ENCODE measurements at regions of chr9 and their contacts with region 1.

Region 1: GRCh38 chr9:112717661-112718341 is at the start of gene INIP:
- H3K4me3 ChIP-seq: peak within 1 kb of the TSS; percentile 81
- H3K27ac ChIP-seq: peak within 1 kb of the TSS; percentile 57
- H3K4me1 ChIP-seq: no peaks in the 10 kb centered on the region
- CTCF ChIP-seq: peak; percentile 70

Region 2: GRCh38 chr9:112379177-112380101 is 338.4 kb before region 1 on chr9:
- CTCF ChIA-PET with region 1: no interaction called
- POLR2A ChIA-PET with region 1: interaction called, 16 read pairs
- H3K4me3 ChIP-seq: peak overlapping the region; percentile 89
- H3K27ac ChIP-seq: peak overlapping the region; percentile 95
- H3K4me1 ChIP-seq: no peaks in the 10 kb centered on the region
- CTCF ChIP-seq: no peak

Region 3: DNA sequence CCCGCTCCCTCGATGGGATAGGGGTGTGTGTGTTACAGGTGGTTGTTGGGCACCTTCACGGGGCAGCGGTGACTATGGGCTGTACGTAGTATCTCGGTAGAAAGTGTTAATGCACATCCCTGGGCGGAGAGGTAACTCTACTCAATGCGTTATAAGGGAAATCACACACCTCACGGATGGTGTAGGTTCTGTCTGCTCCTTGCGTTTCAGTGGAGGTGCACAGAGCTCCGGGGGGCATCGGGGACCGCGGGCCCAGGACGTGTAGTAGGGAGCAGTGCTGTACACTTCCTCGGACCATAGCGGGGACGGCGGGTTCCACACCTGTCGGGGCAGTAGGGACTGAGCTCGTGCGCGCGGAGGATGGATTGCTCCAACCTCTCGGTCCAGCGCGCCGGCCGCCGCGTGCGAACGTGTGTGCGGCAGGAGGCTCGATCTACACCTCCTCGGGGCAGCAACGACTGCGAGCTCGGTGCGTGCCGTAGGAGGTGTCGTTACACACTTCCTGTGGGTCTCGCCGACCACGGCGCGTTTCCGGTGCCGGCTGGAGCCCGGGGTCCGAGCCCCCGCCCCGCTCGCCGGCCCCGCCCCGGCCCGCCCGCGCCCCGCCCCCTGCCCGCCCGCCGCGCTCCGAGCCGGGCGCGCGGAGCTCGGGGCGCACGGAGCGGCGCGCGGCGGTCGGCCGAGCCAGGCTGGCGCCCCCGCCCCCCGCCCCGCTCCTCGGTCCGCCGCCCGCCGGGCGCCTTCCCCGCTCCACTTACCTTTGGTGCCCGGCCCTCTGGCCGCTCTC is 231.4 kb before region 1 on chr9 and contains the start of gene KIAA1958:
- CTCF ChIA-PET with region 1: interaction called, 3 read pairs
- POLR2A ChIA-PET with region 1: interaction called, 10 read pairs
- H3K4me3 ChIP-seq: peak within 1 kb of the TSS; percentile 97
- H3K27ac ChIP-seq: peak within 1 kb of the TSS; percentile 82
- H3K4me1 ChIP-seq: peaks cover 11% of the 10 kb centered on the region; the same call in 1 of the 2 replicates
- CTCF ChIP-seq: 0 out of 2 replicates have a peak, but pooled peaks have one; percentile 8

Region 4: GRCh38 chr9:112605518-112605917 is 112.3 kb before region 1 on chr9:
- CTCF ChIA-PET with region 1: no interaction called
- POLR2A ChIA-PET with region 1: no interaction called
- H3K4me3 ChIP-seq: no peak overlapping the region
- H3K27ac ChIP-seq: no peak overlapping the region
- H3K4me1 ChIP-seq: no peaks in the 10 kb centered on the region
- CTCF ChIP-seq: no peak

Region 5: GRCh38 chr9:112642126-112642525 is 75.7 kb before region 1 on chr9:
- CTCF ChIA-PET with region 1: no interaction called
- POLR2A ChIA-PET with region 1: no interaction called
- H3K4me3 ChIP-seq: no peak overlapping the region
- H3K27ac ChIP-seq: no peak overlapping the region
- H3K4me1 ChIP-seq: no peaks in the 10 kb centered on the region
- CTCF ChIP-seq: no peak

Region 6: DNA sequence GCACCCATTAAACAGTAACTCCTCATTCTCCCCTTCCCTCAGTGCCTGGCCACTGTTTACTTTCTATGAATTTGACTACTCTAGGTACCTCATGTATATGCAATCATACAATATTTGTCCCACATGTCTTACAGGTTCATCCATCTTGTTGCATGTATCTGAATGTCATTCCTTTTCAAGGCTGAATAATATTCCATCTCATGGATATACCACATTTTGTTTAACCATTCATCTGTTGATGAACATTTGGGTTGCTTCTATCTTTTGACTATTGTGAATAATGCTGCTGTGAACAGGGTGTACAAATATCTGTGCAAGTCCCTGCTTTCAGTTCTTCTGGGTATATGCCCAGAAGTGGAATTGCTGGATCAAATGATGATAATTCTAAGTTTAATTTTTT is 40.8 kb before region 1 on chr9:
- CTCF ChIA-PET with region 1: no interaction called
- POLR2A ChIA-PET with region 1: no interaction called
- H3K4me3 ChIP-seq: no peak overlapping the region
- H3K27ac ChIP-seq: no peak overlapping the region
- H3K4me1 ChIP-seq: no peaks in the 10 kb centered on the region
- CTCF ChIP-seq: no peak

Region 7: GRCh38 chr9:112750111-112750767 is 32.4 kb after region 1 on chr9 and contains the start of gene SNX30:
- CTCF ChIA-PET with region 1: interaction called, 5 read pairs
- POLR2A ChIA-PET with region 1: interaction called, 18 read pairs
- H3K4me3 ChIP-seq: peak within 1 kb of the TSS; percentile 58
- H3K27ac ChIP-seq: peak within 1 kb of the TSS; percentile 64; the same call in 1 of the 2 replicates
- H3K4me1 ChIP-seq: peaks cover 2% of the 10 kb centered on the region; the same call in 1 of the 2 replicates
- CTCF ChIP-seq: peak; percentile 51; the same call in 1 of the 2 replicates

Region 8: DNA sequence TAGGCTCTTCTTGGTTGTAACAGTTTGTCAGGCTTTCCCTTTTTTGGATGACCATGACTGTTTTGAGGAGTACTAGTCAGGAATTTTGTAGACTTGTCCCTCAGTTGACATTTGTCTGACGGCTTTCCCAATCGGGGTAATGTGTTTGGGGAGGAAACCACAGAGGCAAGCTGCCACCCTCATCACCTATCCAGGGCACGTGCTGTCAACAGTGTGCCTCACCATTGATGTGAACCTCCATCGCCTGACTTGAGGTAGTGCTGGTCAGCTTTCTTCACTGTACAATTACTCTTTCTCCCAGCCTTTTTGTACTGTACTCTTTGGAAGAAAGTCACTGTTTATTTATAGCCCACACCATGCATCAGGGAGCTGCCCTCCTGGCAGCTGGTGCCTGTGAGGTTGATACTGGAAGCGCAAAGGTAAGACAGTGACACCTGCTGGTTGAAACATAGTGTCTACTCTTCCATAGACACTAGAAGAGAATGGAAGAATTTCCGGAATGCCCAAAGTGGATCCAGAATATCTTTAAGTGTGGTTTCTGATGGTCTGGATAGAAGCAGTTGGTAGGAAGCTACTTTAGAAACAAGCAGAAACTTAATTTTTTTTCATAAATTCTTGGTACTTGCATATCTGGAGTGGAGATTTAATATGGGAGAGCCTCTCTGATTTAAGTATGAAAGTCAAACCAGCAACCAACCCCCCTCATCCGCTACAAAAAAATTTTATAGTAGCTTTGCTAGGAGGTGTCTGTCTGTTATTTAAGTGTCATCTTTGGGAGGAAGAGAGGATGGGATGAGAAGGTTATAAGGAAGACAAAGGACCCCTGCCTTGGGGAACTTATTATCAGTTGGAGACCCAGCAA is 102.1 kb after region 1 on chr9:
- CTCF ChIA-PET with region 1: interaction called, 20 read pairs
- POLR2A ChIA-PET with region 1: interaction called, 3 read pairs
- H3K4me3 ChIP-seq: no peak overlapping the region
- H3K27ac ChIP-seq: no peak overlapping the region
- H3K4me1 ChIP-seq: no peaks in the 10 kb centered on the region
- CTCF ChIP-seq: no peak

Measured in HEK293 (cell line).